ENCODE measurements at regions of chr9 and their contacts with region 1.

Region 1: DNA sequence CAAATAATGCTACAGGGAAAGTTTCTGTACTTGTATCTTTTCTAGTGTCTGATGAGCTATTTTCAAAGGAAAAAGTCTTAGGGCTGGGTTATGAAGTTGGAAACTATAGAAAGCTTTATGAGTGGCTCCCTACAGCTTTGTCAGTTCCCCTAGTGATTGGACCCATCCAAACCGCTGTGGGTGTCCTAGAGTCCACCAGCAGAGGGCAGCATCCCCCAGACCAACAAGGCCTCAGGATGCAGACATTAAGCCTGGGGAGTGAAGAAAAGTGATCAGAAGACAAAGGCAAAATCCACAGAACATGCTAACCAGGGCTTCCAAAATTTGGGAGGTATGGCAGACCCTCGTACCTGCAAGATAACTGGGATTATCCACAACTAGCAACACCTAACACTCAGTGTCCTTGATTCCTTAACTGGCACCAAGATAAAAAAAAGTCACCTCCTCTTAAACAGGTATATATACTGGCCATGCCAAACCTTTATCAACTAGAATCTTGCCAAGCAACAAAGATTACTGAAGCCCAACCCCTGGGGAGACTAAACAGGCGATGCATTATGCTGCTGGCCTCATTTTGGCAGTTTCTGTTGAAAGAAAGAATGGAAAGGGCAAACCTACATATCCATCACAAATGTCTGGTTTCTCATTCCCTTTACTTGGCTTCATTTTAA is 110.4 kb upstream of the NR5A1 start:
- DNase-seq: peak; percentile 82
- H3K4me3 Mint-ChIP-seq: no peak overlapping the region
- H3K27ac Mint-ChIP-seq: no peak overlapping the region
- H3K4me1 Mint-ChIP-seq: no peaks in the 10 kb centered on the region
- H3K27me3 Mint-ChIP-seq: peaks cover 4% of the 10 kb centered on the region

Region 2: GRCh38 chr9:124629600-124629999 is 12.0 kb after region 1 on chr9:
- CTCF ChIA-PET with region 1: interaction called, 11 read pairs
- POLR2A ChIA-PET with region 1: no interaction called
- intact Hi-C with region 1: no loop called
- DNase-seq: no peak
- H3K4me3 Mint-ChIP-seq: no peak overlapping the region
- H3K27ac Mint-ChIP-seq: no peak overlapping the region
- H3K4me1 Mint-ChIP-seq: no peaks in the 10 kb centered on the region
- H3K27me3 Mint-ChIP-seq: peaks cover 6% of the 10 kb centered on the region

Region 3: DNA sequence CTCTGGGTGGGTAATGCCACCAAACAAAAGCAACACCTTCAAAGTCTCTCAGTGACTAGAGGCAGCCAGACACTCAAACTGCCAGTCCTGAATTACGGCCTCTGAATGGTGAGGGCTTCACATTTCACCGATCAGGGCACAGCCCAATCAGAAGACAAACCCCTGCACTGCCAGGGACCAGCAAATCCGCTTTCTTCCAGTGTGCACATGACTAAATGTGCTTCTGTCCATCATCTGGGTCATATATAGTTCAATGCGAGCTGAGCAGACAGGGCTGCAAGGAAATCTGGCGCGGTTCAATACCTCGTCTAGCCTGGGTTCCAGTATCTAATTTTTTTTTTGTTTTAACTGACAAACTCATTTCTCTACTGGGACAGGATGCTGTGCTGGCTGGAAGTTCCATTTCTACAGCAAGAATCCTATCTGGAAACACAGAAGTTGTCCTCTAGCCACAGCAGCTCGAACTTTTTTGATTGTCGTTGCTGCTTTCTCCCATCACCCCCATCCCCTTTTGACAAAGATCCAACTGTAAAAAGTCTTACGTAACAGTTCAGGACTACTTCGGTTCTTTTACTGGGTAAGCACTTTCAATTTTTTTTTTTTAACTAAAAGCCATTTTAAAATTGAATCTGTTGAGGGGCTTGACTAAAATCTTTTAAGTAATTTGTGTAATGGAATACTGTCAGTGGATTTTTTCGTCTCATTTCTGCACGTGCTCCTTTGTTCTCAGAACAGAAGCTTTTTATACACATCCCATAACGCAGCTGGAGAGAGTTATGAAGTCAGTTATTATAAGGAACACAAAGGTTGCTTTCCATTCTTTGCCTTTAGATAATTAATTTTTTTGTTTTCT is 40.8 kb after region 1 on chr9:
- CTCF ChIA-PET with region 1: interaction called, 12 read pairs
- POLR2A ChIA-PET with region 1: no interaction called
- intact Hi-C with region 1: no loop called
- DNase-seq: peak; percentile 49
- H3K4me3 Mint-ChIP-seq: peak overlapping the region; percentile 81
- H3K27ac Mint-ChIP-seq: no peak overlapping the region
- H3K4me1 Mint-ChIP-seq: peaks cover 21% of the 10 kb centered on the region
- H3K27me3 Mint-ChIP-seq: peaks cover 25% of the 10 kb centered on the region

Region 4: DNA sequence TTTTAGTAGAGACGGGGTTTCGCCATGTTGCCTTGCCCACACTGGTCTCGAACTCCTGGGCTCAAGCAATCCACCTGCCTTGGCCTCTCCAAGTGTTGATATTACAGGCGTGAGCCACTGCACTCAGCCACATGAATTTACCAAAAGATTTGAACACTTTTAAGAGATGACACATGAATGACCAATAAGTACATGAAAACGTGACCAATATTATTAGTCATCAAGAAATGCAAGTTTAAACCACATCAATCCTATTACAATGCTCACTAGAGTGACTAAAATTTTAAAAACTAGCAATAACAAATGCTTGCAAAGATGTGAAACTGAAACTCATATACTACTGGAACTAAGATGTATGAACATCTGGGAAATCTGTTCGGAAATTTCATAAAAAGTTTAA is 99.2 kb after region 1 on chr9:
- CTCF ChIA-PET with region 1: interaction called, 83 read pairs
- POLR2A ChIA-PET with region 1: no interaction called
- intact Hi-C with region 1: loop called (anchors 1 kb)
- DNase-seq: peak; percentile 27
- H3K4me3 Mint-ChIP-seq: no peak overlapping the region
- H3K27ac Mint-ChIP-seq: no peak overlapping the region
- H3K4me1 Mint-ChIP-seq: peaks cover 13% of the 10 kb centered on the region
- H3K27me3 Mint-ChIP-seq: peaks cover 13% of the 10 kb centered on the region

Region 5: GRCh38 chr9:124802426-124802825 is 184.8 kb after region 1 on chr9:
- CTCF ChIA-PET with region 1: no interaction called
- POLR2A ChIA-PET with region 1: no interaction called
- intact Hi-C with region 1: no loop called
- DNase-seq: no peak
- H3K4me3 Mint-ChIP-seq: no peak overlapping the region
- H3K27ac Mint-ChIP-seq: no peak overlapping the region
- H3K4me1 Mint-ChIP-seq: no peaks in the 10 kb centered on the region
- H3K27me3 Mint-ChIP-seq: peaks cover 4% of the 10 kb centered on the region

Measured in activated CD4-positive, alpha-beta memory T cell treated with anti-CD3 and anti-CD28 coated beads for 36 hours (primary cell).